Activated CD4-positive, alpha-beta T cell treated with anti-CD3 and anti-CD28 coated beads for 36 hours (primary cell): ENCODE measurements at regions of chr19 and their contacts with region 1.

Region 1: GRCh38 chr19:55599468-55600279 is at the start of gene FIZ1:
- DNase-seq: peak; percentile 98
- ATAC-seq: peak; percentile 79
- H3K4me3 Mint-ChIP-seq: peak within 1 kb of the TSS; percentile 89
- H3K27ac Mint-ChIP-seq: peak within 1 kb of the TSS; percentile 99
- H3K4me1 Mint-ChIP-seq: peaks cover 31% of the 10 kb centered on the region
- H3K27me3 Mint-ChIP-seq: no peaks in the 10 kb centered on the region
- total RNA-seq, gene FIZ1: 13.6 to 14.7 TPM

Region 2: DNA sequence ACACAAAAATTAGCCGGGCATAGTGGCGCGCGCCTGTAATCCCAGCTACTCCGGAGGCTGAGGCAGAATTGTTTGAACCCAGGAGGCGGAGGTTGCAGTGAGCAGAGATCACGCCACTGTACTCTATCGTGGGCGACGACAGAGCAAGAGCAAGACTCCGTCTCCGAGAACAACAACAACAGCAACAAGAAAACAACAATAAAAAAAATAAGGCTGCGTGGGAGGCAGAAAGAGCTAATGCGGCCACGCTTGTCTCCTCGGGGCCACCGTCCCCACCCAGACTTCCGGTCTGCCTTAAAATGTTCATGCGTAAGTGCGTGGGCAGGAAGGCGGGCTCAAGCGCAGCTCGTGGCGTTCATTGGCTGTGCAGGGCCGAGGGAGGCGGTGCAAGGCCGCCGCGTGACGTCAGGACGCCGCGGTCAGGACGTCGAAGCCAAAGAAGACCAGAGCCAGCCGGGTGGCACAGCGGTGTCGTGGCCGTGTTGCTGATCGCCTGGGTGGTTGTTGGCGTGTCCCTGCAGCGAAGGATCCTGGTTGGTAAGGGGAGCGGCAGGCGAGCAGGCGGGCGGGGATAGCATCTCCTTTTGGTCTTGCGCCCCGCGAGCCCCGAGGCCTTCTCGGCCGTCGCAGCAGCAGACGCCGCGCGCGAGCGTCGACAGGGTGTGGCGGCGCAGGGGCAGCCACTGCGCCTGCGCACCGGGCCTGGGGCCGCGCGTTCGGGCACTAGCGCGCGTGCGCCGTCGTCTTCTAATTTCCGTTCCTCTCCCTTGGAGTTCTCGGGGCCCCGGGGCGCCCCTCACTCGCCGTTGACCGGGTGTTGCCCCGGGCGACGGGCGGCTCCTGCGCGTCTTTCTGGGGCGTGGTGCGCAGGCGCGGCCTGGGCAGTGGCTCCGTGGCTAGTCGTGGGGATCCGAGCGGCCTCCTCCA is 1150.6 kb before region 1 on chr19 and contains the start of gene LENG8:
- CTCF ChIA-PET with region 1: no interaction called
- POLR2A ChIA-PET with region 1: no interaction called
- intact Hi-C with region 1: loop called in 1 of 2 experiments (anchors 1 kb)
- DNase-seq: peak; percentile 98
- ATAC-seq: peak; percentile 92
- H3K4me3 Mint-ChIP-seq: peak within 1 kb of the TSS; percentile 98
- H3K27ac Mint-ChIP-seq: peak within 1 kb of the TSS; percentile 98
- H3K4me1 Mint-ChIP-seq: peaks cover 36% of the 10 kb centered on the region
- H3K27me3 Mint-ChIP-seq: no peaks in the 10 kb centered on the region
- total RNA-seq, gene LENG8: 156 to 221 TPM

Region 3: GRCh38 chr19:55166530-55167268 is 433.0 kb before region 1 on chr19 and contains the start of gene DNAAF3:
- CTCF ChIA-PET with region 1: no interaction called
- POLR2A ChIA-PET with region 1: no interaction called
- intact Hi-C with region 1: loop called in 1 of 2 experiments (anchors 10 kb)
- DNase-seq: peak; percentile 95
- ATAC-seq: peak; percentile 95
- H3K4me3 Mint-ChIP-seq: peak within 1 kb of the TSS; percentile 71
- H3K27ac Mint-ChIP-seq: peak within 1 kb of the TSS; percentile 11
- H3K4me1 Mint-ChIP-seq: peaks cover 10% of the 10 kb centered on the region
- H3K27me3 Mint-ChIP-seq: peaks cover 45% of the 10 kb centered on the region
- total RNA-seq, gene DNAAF3: 0.53 to 0.72 TPM

Region 4: GRCh38 chr19:55325172-55325571 is 274.5 kb before region 1 on chr19 and contains the start of gene TMEM150B:
- CTCF ChIA-PET with region 1: no interaction called
- POLR2A ChIA-PET with region 1: no interaction called
- intact Hi-C with region 1: no loop called
- DNase-seq: no peak
- ATAC-seq: no peak
- H3K4me3 Mint-ChIP-seq: no peak within 1 kb of the TSS
- H3K27ac Mint-ChIP-seq: no peak within 1 kb of the TSS
- H3K4me1 Mint-ChIP-seq: no peaks in the 10 kb centered on the region
- H3K27me3 Mint-ChIP-seq: peaks cover 5% of the 10 kb centered on the region
- total RNA-seq, gene TMEM150B: not detected

Region 5: DNA sequence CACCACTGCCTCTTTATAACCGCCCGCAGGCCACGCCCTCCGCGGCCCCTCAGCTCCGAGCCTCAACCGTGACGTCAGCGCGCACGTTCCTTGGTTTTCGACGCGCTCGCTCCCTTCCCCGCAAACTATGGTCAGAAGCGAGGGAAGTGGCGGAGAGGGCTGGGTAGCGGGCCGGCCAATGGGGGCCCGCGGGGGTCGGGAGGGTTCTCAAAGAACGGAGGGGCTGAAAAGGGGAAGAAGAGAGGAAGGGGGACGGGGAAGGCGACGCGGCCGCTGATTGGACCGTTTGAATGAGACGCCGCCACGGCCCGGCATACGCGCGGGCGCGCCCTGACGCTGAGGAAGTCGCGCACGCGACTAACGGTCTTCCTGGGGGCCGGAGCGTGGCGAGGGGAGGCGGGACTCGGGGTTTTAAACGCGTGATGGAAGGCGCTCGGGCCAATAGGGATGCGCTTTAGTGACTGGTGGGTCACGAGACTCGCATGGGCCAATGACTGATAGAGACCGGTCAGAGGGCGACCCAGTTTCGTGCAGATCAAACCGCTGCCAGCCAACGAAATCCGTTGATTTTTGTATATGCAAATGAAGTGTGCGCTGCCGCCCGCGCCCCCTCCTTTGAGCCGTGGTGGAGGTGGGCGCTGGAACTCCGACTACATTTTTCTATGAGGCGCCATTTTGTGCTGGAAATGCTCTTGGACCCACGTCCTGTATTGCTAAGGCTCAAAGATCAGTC is 191.7 kb before region 1 on chr19:
- CTCF ChIA-PET with region 1: no interaction called
- POLR2A ChIA-PET with region 1: interaction called, 3 read pairs
- intact Hi-C with region 1: loop called in 1 of 2 experiments (anchors 1 kb)
- DNase-seq: peak; percentile 98
- ATAC-seq: peak; percentile 96
- H3K4me3 Mint-ChIP-seq: peak overlapping the region; percentile 90
- H3K27ac Mint-ChIP-seq: peak overlapping the region; percentile 96
- H3K4me1 Mint-ChIP-seq: peaks cover 22% of the 10 kb centered on the region
- H3K27me3 Mint-ChIP-seq: no peaks in the 10 kb centered on the region

Region 6: DNA sequence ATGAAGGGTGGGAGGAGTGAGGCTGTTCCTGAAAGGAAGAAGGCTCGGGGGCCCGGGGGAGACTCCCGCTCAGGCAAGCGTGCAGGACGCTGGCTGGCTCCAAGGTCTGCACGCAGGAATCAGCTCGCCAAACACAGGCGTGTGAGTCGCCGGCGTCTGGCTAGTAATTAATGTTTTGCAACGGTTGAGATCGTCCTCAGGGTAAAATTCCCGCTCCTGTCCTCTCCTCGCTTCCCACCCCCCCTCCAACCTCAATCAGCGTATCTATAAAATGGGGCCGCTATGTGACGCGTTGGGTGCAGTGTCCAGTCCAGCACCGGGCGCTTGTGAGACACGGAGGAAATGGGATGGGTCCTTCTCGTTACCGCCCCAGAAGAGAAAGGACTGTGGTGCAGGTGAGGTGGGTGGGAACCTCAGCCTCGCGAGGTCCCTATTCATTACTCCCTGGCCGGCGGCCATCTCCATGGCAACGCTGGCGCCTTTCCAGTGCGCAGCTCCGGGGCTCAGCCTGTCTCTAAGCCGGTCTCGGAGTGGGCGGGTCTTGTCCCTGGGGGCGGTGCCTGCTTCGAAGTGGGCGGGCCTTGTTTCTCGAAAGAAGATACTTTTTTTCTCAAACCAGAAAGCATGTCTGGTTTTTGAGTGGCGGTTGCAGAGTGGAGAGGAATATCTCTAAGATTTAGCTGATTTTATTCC is 12.6 kb before region 1 on chr19:
- CTCF ChIA-PET with region 1: interaction called, 3 read pairs
- POLR2A ChIA-PET with region 1: interaction called, 4 read pairs
- intact Hi-C with region 1: loop called (anchors 1 kb)
- DNase-seq: peak; percentile 97
- ATAC-seq: peak; percentile 99
- H3K4me3 Mint-ChIP-seq: peak overlapping the region; percentile 71
- H3K27ac Mint-ChIP-seq: peak overlapping the region; percentile 37
- H3K4me1 Mint-ChIP-seq: peaks cover 20% of the 10 kb centered on the region
- H3K27me3 Mint-ChIP-seq: no peaks in the 10 kb centered on the region

Region 7: GRCh38 chr19:55674841-55675660 is 75.4 kb after region 1 on chr19 and contains the start of gene EPN1:
- CTCF ChIA-PET with region 1: no interaction called
- POLR2A ChIA-PET with region 1: no interaction called
- intact Hi-C with region 1: loop called in 1 of 2 experiments (anchors 1 kb)
- DNase-seq: peak; percentile 99
- ATAC-seq: peak; percentile 91
- H3K4me3 Mint-ChIP-seq: peak within 1 kb of the TSS; percentile 95
- H3K27ac Mint-ChIP-seq: peak within 1 kb of the TSS; percentile 96
- H3K4me1 Mint-ChIP-seq: peaks cover 63% of the 10 kb centered on the region
- H3K27me3 Mint-ChIP-seq: no peaks in the 10 kb centered on the region
- total RNA-seq, gene EPN1: 32.5 to 37.1 TPM